ENCODE measurements at regions of chr3 and their contacts with region 1.

Region 1: DNA sequence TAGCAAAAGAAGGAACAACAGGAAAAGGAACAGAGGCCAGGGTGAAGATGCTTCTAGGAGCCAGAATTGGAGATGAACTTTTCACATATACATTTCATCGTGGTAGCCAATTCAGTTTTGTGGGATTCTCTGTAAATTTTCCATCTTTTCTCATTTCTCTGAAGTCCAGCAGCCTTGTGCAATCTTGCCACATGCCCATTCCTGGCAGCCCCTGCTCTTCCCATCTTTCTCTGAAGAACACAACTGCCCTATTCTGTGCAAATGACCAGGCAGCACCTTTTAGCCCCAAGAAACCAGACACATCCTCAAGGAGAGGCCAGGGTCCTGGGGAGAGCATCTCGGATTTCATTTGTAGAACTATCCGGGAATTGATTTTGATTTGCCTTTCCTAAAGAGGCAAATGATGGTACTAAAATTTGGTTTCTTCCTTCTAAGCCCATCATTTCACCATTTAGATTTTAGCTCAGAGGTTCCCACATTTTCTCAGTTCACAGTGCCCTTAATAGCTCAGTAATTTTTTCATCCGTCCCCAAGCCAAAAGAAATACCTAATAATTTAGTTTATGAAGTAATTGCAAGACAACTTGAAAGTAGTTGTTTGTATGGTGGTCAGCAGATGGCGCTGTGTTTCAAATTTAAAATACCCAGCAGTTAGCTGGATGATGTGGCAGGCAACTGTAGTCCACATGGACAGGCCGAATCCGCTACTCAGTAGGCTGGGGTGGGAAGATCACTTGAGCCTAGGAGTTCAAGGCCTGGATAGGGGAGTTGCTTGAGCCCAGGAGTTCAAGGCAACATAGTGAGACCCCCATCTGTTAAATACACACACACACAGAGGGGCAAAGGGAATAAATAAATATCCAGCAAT is 61.3 kb upstream of the ACKR4 start:
- DNase-seq: peak in 4 of 5 donors; percentile 60 to 72 (median 64)
- H3K4me3 ChIP-seq: no peak overlapping the region
- H3K27ac ChIP-seq: no peak overlapping the region
- H3K4me1 ChIP-seq: peaks cover 0 to 3% (median 0%) of the 10 kb centered on the region in 3 donors
- H3K27me3 ChIP-seq: no peaks in the 10 kb centered on the region
- CTCF ChIP-seq: peak; percentile 71

Region 2: GRCh38 chr3:132641837-132642538 is 106.2 kb after region 1 on chr3:
- intact Hi-C with region 1: loop called (anchors 5 kb)
- DNase-seq: peak in 2 of 5 donors; percentile 37 to 55
- H3K4me3 ChIP-seq: no peak overlapping the region
- H3K27ac ChIP-seq: no peak overlapping the region
- H3K4me1 ChIP-seq: no peaks in the 10 kb centered on the region
- H3K27me3 ChIP-seq: no peaks in the 10 kb centered on the region
- CTCF ChIP-seq: peak; percentile 55

Measured in kidney (tissue), 22 donors.